Common myeloid progenitor, CD34-positive (primary cell): ENCODE measurements at regions of chr22 and their contacts with region 1.

Region 1: DNA sequence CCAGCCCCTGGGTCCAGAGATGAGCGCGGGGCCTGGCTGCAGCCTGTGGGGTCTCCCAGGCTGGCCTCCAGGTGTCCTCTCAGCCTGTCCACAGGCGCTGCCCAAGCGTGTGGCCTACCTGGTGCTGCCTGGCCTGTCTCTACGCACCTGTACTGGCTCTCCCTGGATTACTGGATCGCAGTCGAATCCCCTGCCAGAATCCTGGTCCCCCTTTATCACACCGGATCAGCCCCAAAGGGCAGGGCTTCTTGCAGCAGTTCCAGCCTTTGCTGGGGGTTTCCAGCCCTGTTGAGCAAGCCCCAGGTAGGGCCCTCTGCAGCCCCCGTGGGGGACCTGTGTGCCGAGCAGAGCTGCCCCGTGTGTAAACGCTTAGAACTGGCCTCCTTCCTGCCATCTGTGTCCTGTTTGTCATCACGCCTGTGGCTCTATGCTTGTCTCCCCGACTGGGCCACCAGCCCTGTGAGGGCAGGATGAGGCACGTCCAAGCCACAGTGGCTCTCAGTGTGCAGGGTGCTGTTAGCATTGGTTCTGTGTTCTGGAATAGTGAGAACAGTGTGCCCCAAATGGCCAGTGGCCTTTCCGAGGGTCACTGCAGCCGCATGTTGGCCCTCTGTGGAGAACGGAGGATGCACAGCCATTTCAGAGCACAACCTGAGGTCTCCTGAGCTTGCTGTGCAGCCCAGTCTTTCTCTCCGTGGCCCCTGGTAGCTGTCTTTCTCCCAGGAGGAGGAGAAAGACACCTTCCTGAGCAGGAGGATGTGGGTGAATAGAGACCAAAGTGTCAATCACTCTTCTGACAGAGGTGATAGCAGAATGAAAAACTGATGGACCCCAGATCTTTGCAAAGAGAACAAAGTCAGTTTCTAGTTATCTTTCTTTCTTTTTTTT is 13.9 kb upstream of the TXNRD2 start:
- DNase-seq: peak; percentile 57 to 98 (median 96)
- H3K4me3 ChIP-seq: peak overlapping the region in 2 of 7 experiments; percentile 45 to 46
- H3K27ac ChIP-seq: peak overlapping the region; percentile 37 to 72
- H3K4me1 ChIP-seq: peaks cover 0 to 45% (median 25%) of the 10 kb centered on the region in 4 experiments
- H3K27me3 ChIP-seq: no peaks in the 10 kb centered on the region

Region 2: DNA sequence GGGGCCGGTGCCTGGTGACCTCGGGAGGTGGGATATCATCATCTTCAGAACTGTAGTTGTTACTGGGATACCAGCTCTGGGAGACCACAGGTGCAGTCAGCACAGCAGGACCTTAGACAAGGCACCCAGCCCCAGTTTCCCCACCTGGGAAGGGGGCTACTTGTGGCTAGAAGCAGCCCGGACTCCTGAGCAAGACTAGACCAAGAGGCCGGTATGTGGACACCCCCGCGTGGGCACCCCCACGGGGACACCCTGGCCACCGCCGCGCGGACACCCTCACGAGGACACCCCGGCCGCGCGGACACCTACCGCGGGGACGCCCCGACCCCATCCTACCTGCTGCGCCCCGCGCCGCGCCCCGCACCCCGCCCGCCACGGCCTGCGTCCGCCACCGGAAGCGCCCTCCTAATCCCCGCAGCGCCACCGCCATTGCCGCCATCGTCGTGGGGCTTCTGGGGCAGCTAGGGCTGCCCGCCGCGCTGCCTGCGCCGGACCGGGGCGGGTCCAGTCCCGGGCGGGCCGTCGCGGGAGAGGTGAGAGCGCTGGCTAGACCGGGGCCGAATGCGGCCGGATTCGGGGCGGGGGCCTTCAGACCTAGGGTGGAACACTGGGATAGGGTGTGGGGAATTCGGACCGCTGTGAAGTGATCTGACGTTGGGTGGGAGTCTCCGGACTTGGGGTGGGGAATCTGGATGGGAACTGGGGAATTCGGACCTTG is 14.0 kb before region 1 on chr22 and contains the starts of genes COMT and TXNRD2:
- CTCF ChIA-PET with region 1: interaction called, 21 read pairs
- POLR2A ChIA-PET with region 1: interaction called, 3 read pairs
- DNase-seq: peak; percentile 46 to 71 (median 58)
- H3K4me3 ChIP-seq: peak within 1 kb of the TSS; percentile 61 to 91 (median 88)
- H3K27ac ChIP-seq: peak within 1 kb of the TSS; percentile 82 to 98
- H3K4me1 ChIP-seq: peaks cover 7 to 34% (median 29%) of the 10 kb centered on the region in 4 experiments
- H3K27me3 ChIP-seq: no peaks in the 10 kb centered on the region